AG04449 (cell line): ENCODE measurements at regions of chr3 and their contacts with region 1.

Region 1: GRCh38 chr3:104102386-104102785 is 1264.3 kb upstream of the ALCAM start:
- DNase-seq: no peak
- H3K4me3 ChIP-seq: no peak overlapping the region
- CTCF ChIP-seq: peak; percentile 68

Region 2: DNA sequence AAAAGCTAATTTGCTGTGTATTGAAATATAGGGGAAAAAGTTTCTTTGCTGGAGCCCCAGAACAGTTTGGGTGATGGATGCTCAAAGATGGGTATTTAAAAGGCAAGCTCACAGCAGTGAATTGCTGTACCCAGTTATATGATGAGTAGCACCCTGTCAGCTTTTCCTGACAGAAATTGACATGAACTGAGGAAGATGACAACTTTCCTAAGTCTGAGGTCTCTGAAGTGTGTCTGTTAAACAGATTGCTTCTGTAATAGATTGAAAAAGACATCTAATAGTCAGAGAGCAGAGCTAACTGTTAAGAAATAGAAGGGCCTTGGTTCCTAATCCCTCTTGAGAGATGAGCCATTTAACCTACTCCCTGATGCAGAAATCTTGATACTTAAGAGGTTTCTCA is 13.6 kb before region 1 on chr3:
- CTCF ChIA-PET with region 1: interaction called, 34 read pairs
- POLR2A ChIA-PET with region 1: no interaction called
- DNase-seq: no peak
- H3K4me3 ChIP-seq: no peak overlapping the region
- CTCF ChIP-seq: no peak

Region 3: GRCh38 chr3:104126864-104127553 is 24.6 kb after region 1 on chr3:
- CTCF ChIA-PET with region 1: interaction called, 13 read pairs
- POLR2A ChIA-PET with region 1: no interaction called
- DNase-seq: no peak
- H3K4me3 ChIP-seq: no peak overlapping the region
- CTCF ChIP-seq: no peak

Region 4: DNA sequence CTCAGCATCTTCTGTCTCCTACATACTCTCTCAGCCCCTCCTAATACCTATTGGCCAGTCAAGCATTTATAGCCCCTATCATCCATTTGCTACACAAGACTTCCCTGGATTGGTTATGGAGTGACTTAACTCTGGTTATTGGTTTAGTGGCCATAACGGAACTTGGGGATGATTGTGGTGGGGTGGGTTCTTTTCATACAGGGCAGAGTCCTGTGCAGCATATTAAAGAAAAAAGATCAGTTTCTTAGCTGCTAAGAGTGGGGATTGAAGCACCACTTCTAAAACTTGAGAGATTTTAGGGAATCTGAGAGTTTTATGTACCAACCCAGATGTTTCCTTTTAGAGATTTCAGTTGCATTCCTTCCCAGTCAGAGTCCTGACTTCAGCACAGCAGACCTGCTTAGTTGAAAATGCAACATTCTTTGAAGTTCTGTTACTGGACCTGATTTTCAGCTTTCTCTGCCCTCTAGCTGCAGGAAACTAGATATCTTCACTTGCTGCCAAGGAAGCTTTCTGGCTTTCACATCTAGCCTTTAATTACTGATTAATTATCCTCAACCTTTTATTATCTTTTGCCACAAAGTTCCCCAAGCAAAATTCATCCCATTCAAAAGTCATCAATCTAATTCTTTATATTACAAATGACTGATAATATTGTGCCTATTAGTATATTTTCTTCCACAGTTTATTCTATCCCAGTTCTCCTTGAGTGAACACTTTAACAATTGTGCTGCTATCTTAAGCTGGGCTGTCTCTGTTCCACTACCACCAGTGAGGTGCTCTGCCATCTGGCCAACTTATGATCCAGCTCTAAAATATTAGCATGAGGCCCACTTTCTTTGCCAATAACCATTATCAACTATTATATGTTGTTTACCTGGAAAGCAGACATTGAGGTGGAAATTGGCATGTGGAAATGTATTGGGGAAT is 358.4 kb after region 1 on chr3:
- CTCF ChIA-PET with region 1: interaction called, 18 read pairs
- POLR2A ChIA-PET with region 1: no interaction called
- DNase-seq: peak; percentile 49
- H3K4me3 ChIP-seq: no peak overlapping the region
- CTCF ChIP-seq: peak; percentile 46